ENCODE measurements at regions of chr5 and their contacts with region 1.

Region 1: GRCh38 chr5:99060306-99061261 is 131.8 kb upstream of the CHD1 start:
- DNase-seq: peak; percentile 80 to 88 (median 82)
- H3K4me3 ChIP-seq: no peak overlapping the region
- H3K27ac ChIP-seq: no peak overlapping the region
- H3K4me1 ChIP-seq: peaks cover 0 to 3% (median 0%) of the 10 kb centered on the region in 4 experiments
- H3K27me3 ChIP-seq: peaks cover 0 to 1% (median 0%) of the 10 kb centered on the region in 5 experiments

Region 2: GRCh38 chr5:98905857-98906690 is 154.5 kb before region 1 on chr5:
- CTCF ChIA-PET with region 1: interaction called, 27 read pairs
- POLR2A ChIA-PET with region 1: no interaction called
- DNase-seq: peak; percentile 61 to 81 (median 77)
- H3K4me3 ChIP-seq: no peak overlapping the region
- H3K27ac ChIP-seq: no peak overlapping the region
- H3K4me1 ChIP-seq: no peaks in the 10 kb centered on the region
- H3K27me3 ChIP-seq: no peaks in the 10 kb centered on the region

Region 3: DNA sequence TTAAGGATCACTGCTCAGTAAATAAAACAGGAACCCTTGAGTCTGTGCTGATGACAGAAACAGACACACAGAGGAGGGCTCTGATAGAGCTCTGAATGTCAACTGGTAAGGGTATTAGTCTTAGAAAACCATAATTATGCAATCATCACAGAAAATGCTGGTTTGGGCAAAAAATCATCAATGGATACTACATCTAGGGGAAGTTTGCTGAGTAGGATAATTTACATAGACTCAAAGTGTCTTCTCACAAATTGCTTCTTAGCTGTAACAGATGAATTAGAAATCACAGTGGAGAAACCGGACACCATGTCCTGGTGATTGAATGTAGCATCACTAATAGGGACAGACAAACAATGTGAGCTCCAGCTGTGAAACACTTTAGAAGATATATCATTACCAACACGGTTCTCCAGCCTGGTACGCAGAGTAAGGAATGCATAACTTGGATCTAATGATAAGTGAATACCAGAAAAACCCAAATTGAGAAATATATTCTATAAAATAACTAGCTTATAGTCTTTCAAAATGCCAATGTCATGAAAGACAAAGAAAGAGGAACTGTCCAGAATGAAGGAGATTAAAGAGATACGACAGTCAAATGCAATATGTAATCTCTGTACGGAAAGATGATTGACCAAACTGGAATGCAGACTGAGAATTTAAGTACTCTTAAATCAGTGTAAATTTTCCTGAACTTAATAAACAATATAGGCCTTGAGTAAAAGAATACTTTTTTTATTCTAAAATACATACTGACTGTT is 149.1 kb before region 1 on chr5:
- CTCF ChIA-PET with region 1: interaction called, 27 read pairs
- POLR2A ChIA-PET with region 1: no interaction called
- DNase-seq: peak in 2 of 3 donors; percentile 35 to 50
- H3K4me3 ChIP-seq: no peak overlapping the region
- H3K27ac ChIP-seq: no peak overlapping the region
- H3K4me1 ChIP-seq: no peaks in the 10 kb centered on the region
- H3K27me3 ChIP-seq: no peaks in the 10 kb centered on the region